ENCODE measurements at regions of chr1 and their contacts with region 1.

Region 1: DNA sequence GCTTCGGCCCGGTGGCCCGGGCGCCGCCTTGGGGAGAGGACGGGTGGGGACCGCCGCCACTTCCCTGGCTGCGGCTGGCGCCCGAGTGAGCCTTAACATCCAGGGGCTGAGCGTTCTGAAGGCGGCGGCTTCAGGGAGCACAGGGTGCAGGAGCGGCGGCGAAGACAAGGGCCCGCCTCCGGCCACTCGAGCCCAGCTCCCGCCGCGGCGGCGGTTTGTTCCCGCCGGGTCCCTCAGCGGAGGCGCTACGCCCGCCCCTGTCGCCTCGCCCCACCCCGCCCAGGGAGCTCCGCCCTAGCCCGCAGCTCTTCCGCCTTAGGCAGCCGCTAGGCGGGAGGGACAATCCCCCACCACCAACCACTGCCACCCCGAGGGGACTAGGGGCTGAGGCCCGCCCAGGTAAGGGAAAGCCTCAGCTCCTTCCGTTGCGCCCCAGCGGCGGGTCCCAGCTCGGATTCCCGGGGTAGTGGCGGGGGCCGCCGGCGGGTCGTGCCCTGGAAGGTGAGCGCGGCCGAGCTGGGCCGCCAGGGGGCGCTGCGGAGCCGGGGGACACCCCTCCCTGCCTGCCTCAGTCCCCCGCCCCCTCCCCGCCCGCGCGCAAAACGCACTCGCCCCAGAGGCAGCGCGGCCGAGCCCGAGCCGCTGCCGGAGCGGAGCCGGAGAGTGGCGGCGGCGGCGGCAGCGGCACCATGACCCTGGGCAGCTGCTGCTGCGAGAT is at the start of gene FOXD2:
- DNase-seq: peak; percentile 51 to 93
- H3K4me3 ChIP-seq: peak within 1 kb of the TSS; percentile 76 to 78
- H3K27ac ChIP-seq: peak within 1 kb of the TSS; percentile 94 to 95
- H3K4me1 ChIP-seq: peaks cover 7 to 35% of the 10 kb centered on the region in 2 donors
- H3K27me3 ChIP-seq: no peaks in the 10 kb centered on the region
- CTCF ChIP-seq: peak; percentile 90 to 99 (median 97)
- total RNA-seq, gene FOXD2: 1.3 TPM

Region 2: DNA sequence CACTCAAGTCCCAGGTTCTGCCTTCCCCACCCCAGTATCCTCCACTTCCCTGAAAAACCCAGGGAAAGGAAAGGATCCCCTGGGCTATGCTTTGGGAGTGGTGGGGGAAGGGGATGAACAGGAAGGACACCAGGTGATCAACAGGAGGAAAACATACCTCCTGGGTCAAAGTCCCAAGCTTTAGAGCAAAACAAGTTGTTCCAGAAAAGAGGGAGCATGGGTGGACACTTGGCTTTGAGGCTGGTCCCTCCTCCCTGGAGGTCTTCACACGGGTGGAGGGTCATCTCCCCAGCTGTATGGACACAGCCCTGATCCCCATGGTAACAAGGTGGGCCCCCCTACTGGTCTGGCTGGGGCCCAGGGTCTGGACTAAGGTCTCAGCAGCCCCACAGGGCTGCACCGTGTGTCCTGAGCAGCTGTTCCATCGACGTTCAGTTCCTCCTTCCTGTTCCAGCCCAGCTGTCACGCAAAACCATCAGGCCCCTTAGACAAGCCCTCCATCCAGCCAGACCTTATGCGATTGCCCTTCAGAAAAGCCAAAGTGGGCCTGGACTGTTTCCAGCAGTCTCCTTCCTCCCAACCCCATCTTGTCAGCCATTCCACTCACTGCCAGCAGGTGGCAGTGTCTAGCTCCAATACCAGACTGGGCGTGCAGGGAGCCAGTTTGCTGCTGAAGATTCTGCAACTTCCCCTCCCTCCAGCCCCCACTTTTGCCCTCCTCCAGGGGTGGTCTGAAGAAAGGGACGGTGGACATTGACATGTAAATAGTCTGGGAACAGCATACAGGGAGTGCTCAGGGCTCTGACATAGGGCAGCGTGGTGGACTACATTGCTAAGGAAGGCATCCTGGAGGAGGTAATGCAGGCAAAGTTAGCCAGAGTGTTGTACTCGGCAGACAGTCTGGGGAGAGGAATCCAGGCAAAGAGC is 244.9 kb before region 1 on chr1:
- intact Hi-C with region 1: loop called (anchors 5 kb)
- DNase-seq: peak in 1 of 2 donors; percentile 83
- H3K4me3 ChIP-seq: no peak overlapping the region
- H3K27ac ChIP-seq: no peak overlapping the region
- H3K4me1 ChIP-seq: peaks cover 7 to 28% of the 10 kb centered on the region in 2 donors
- H3K27me3 ChIP-seq: no peaks in the 10 kb centered on the region
- CTCF ChIP-seq: peak; percentile 84 to 96 (median 90)

Region 3: GRCh38 chr1:47333922-47334764 is 103.5 kb before region 1 on chr1:
- intact Hi-C with region 1: loop called (anchors 5 kb)
- DNase-seq: peak; percentile 31 to 90
- H3K4me3 ChIP-seq: peak overlapping the region; percentile 93 to 100
- H3K27ac ChIP-seq: peak overlapping the region; percentile 99 to 100
- H3K4me1 ChIP-seq: peaks cover 14 to 22% of the 10 kb centered on the region in 2 donors
- H3K27me3 ChIP-seq: no peaks in the 10 kb centered on the region
- CTCF ChIP-seq: peak in 1 of 3 experiments; percentile 28

Region 4: GRCh38 chr1:47521034-47521881 is 83.7 kb after region 1 on chr1:
- intact Hi-C with region 1: loop called (anchors 5 kb)
- DNase-seq: peak; percentile 67 to 92
- H3K4me3 ChIP-seq: no peak overlapping the region
- H3K27ac ChIP-seq: peak overlapping the region; percentile 83 to 90
- H3K4me1 ChIP-seq: peaks cover 4 to 26% of the 10 kb centered on the region in 2 donors
- H3K27me3 ChIP-seq: no peaks in the 10 kb centered on the region
- CTCF ChIP-seq: no peak

Region 5: DNA sequence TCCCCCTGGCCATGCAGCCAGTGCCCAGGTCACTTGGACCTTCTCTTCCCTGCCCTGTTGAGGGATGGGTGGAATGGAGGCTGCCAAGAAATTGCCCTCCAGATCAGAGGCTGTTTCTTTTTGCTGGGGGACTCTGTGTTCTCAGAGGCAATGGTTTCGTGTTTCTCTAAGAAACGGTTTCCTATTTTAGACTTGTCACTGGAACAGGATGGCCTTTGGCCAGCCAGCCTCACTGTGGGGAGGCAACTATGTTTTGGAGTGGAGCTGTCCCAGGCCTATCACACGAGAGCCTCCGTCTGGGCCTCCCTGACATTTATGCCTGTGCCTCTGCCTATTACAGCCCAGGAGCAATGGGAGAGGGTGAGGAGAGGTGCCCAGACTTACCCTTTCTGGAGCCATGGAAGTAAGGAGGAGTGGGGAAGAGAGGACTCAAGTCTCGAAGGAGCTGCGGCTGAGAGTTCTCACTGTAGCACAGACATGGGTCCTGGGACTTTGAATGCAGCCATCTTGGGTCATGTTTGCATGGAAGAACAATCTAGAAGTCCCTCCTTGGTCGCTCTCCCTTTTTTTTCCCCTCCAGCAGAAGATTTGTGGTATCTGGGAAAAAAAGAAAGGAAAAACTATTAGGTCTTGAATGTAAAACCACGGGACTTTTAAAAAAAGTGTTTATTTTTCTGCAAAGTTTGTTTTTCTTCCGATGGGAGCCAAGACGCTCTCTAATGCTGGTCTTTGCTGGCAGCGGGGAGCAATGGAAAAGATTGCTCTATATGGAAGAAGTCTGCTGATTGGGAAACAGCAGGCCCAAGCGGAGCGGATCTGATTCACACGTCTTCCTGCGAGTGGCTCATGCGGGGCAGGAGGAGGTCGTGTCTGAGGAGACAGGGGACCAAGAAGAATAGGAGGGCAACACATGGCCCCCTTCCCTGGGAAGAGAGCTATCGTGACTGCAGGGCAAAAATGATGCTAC is 219.4 kb after region 1 on chr1:
- intact Hi-C with region 1: loop called (anchors 1 kb)
- DNase-seq: peak; percentile 79 to 96
- H3K4me3 ChIP-seq: peak overlapping the region in 1 of 2 donors; percentile 20
- H3K27ac ChIP-seq: peak overlapping the region; percentile 97 to 98
- H3K4me1 ChIP-seq: peaks cover 3 to 60% of the 10 kb centered on the region in 2 donors
- H3K27me3 ChIP-seq: no peaks in the 10 kb centered on the region
- CTCF ChIP-seq: no peak

Region 6: GRCh38 chr1:47710329-47711071 is 272.9 kb after region 1 on chr1:
- intact Hi-C with region 1: loop called (anchors 1 kb)
- DNase-seq: peak in 1 of 2 donors; percentile 88
- H3K4me3 ChIP-seq: peak overlapping the region; percentile 40 to 65
- H3K27ac ChIP-seq: no peak overlapping the region
- H3K4me1 ChIP-seq: peaks cover 12 to 13% of the 10 kb centered on the region in 2 donors
- H3K27me3 ChIP-seq: no peaks in the 10 kb centered on the region
- CTCF ChIP-seq: peak; percentile 96 to 100 (median 99)

Region 7: GRCh38 chr1:47843781-47844557 is 406.4 kb after region 1 on chr1:
- intact Hi-C with region 1: no loop called
- DNase-seq: no peak
- H3K4me3 ChIP-seq: no peak overlapping the region
- H3K27ac ChIP-seq: no peak overlapping the region
- H3K4me1 ChIP-seq: peaks cover 0 to 6% of the 10 kb centered on the region in 2 donors
- H3K27me3 ChIP-seq: no peaks in the 10 kb centered on the region
- CTCF ChIP-seq: no peak

Region 8: DNA sequence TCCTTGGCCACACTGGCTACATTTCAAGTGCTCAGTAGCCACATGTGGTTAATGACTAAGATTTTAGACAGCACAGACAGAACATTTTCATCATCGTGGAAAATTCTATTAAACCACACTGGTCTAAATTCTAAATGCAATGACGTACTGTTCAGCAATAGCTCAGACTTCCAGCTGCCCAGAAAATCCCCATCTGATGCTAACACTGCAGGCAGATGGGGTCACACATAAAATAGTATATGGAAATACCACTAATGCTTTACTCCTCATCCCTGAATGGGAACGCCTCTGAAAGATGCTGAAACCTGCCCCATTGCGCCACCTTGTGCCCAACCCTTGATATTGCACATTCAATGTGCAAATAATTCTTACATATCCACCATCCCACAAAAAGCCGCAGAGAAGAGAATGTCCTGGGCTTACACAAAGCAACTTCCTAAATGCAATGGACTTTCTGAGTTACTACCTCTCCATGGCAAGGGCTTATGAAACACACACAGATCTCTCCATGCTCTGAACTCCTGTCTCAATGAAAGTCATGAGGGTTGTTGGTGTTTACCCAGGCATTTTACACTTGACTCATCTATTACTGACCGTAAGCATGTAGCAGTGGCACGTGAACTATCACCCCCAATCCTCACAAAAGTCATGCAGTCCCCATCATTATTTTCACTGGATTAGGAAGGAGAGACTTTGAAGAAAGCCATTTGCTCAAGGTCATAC is 764.6 kb after region 1 on chr1:
- intact Hi-C with region 1: loop called (anchors 5 kb)
- DNase-seq: peak in 1 of 2 donors; percentile 78
- H3K4me3 ChIP-seq: no peak overlapping the region
- H3K27ac ChIP-seq: no peak overlapping the region
- H3K4me1 ChIP-seq: peaks cover 0 to 7% of the 10 kb centered on the region in 2 donors
- H3K27me3 ChIP-seq: no peaks in the 10 kb centered on the region
- CTCF ChIP-seq: peak; percentile 66 to 82 (median 76)

Measured in ascending aorta (tissue), 2 donors.